ENCODE measurements at regions of chr15 and their contacts with region 1.

Region 1: DNA sequence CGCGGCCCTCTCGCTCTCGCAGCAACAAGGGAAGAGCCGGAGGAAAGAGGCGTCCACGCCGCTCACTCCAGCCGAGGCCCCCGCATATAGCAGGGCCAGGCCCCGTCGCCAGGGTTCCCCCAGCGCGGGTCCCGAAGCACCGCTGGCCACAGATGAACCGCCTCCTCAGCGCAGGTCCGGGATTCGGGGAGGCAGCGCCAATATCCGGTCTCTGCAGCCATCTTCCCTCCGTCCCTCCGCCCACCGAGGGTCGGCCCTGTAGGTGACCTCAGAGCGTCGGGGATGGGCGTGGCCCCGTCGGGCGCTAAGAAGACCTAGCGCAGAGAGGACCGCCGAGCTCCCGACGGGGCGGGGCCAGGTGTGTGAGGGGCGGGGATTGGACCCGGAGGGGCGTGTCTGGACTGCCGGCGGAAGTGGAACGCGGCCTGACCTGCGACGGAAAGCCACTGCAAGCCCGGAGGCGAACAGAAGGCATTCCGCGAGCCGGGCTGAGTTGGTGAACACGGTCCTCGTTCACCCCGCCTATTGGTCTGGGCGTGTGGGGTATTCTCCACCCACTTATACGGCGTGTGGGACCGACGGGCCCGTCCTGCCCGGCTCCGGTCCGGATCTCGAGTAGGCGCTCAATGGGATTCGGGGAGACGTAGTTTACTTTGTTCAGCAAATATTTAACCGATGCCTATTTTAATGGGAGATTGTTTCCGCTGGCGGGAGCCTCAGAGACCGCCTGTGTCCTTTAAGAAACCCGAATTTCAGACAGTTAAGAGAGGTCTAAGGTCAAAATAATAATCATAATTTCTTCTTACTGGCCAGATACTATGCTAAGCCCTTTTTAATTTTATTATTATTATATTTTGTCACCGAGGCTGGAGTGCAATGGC is 26.9 kb upstream of the MTHFS start:
- DNase-seq: peak; percentile 96 to 100 (median 98)
- ATAC-seq: peak; percentile 90 to 91
- H3K4me3 Mint-ChIP-seq: peak overlapping the region; percentile 90 to 100 (median 93)
- H3K27ac Mint-ChIP-seq: peak overlapping the region; percentile 95 to 99 (median 98)
- H3K4me1 Mint-ChIP-seq: peaks cover 13 to 33% (median 29%) of the 10 kb centered on the region in 4 donors
- H3K27me3 Mint-ChIP-seq: no peaks in the 10 kb centered on the region

Region 2: DNA sequence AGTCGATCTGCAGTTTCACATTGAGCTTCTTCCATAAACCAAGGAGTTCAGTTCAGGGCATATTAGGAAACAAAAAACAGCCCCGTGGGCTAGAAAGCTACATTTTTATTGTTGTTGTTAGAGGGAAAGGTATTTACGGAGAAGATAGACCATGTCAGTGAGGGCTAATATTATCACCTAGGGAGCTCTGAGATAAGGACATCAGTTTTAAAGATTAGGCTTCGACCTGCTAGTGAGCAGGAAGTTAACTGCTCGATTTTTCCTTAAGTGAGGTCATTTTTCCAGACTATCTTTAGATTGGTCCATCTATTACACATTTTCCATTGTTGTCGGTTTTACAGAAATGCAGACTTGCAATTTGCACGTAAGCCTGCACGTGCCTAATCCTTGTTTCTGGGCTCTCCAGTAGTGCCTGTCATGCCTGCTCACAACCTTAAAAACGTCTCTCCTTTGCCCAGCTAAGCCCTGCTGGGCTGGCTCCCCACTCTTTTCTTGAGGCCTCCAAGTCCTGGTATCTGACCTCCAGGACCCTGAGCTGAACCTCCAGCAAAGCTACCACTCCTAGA is 99.5 kb before region 1 on chr15:
- POLR2A ChIA-PET with region 1: no interaction called
- DNase-seq: no peak
- ATAC-seq: no peak
- H3K4me3 Mint-ChIP-seq: no peak overlapping the region
- H3K27ac Mint-ChIP-seq: no peak overlapping the region
- H3K4me1 Mint-ChIP-seq: peaks cover 0 to 3% (median 0%) of the 10 kb centered on the region in 4 donors
- H3K27me3 Mint-ChIP-seq: peaks cover 0 to 3% (median 0%) of the 10 kb centered on the region in 5 donors

Region 3: DNA sequence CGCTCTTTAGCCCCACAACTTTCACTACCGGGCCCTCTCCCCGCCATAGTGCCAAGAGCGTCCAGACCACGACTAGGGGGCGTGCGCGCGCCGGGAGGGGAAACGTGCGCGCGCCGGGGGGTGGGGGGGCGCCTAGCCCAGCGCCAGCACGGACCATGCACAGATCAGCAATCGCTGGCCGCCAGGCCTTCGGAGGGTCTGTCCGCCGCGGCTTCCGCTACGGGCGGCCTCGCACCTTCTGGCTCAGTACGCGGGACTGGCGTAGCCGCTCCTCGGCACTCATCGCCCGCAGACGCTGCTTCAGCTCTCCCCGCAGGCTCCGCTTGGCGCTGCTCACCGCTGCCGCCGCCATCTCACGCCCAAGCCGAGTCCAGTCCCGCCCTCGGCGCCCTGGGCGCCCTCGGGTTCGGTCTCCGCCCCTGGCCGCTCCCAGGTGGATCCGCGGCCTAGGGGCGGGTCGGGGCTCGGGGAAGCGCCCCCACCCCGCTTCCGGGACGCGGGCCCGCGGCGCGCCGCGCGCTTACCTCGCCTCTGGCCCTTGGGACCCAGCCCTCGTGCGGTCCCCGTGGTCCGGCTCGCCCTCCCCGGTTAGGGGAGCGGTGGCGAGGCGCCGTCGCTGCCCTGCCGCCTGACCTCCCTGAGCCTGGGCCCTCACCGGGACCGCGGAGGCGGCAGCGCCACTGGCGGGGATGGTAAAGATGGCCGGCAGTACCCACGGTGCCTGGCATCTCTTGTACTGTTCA is 26.9 kb before region 1 on chr15 and contains the start of gene MTHFS:
- POLR2A ChIA-PET with region 1: interaction called, 170 read pairs
- DNase-seq: peak; percentile 70 to 90 (median 77)
- ATAC-seq: peak; percentile 87 to 88
- H3K4me3 Mint-ChIP-seq: peak within 1 kb of the TSS; percentile 85 to 100 (median 98)
- H3K27ac Mint-ChIP-seq: peak within 1 kb of the TSS; percentile 99 to 100 (median 100)
- H3K4me1 Mint-ChIP-seq: peaks cover 23 to 46% (median 35%) of the 10 kb centered on the region in 4 donors
- H3K27me3 Mint-ChIP-seq: no peaks in the 10 kb centered on the region
- polyA plus RNA-seq, gene MTHFS: 82.6 to 106 (median 85.4) TPM

Region 4: GRCh38 chr15:79904271-79904670 is 19.5 kb before region 1 on chr15:
- POLR2A ChIA-PET with region 1: interaction called, 170 read pairs
- DNase-seq: no peak
- ATAC-seq: no peak
- H3K4me3 Mint-ChIP-seq: no peak overlapping the region
- H3K27ac Mint-ChIP-seq: no peak overlapping the region
- H3K4me1 Mint-ChIP-seq: peaks cover 0 to 5% (median 3%) of the 10 kb centered on the region in 4 donors
- H3K27me3 Mint-ChIP-seq: no peaks in the 10 kb centered on the region

Region 5: GRCh38 chr15:79970624-79971434 is 47.1 kb after region 1 on chr15 and contains the start of gene BCL2A1:
- POLR2A ChIA-PET with region 1: interaction called, 95 read pairs
- DNase-seq: peak; percentile 11 to 80 (median 56)
- ATAC-seq: peak; percentile 73 to 90
- H3K4me3 Mint-ChIP-seq: peak within 1 kb of the TSS; percentile 87 to 97 (median 93)
- H3K27ac Mint-ChIP-seq: peak within 1 kb of the TSS; percentile 94 to 97 (median 95)
- H3K4me1 Mint-ChIP-seq: peaks cover 26 to 58% (median 54%) of the 10 kb centered on the region in 4 donors
- H3K27me3 Mint-ChIP-seq: no peaks in the 10 kb centered on the region
- polyA plus RNA-seq, gene BCL2A1: 19.6 to 27.4 (median 25.9) TPM

Region 6: GRCh38 chr15:80058851-80059785 is 135.4 kb after region 1 on chr15 and contains the start of gene ZFAND6:
- POLR2A ChIA-PET with region 1: interaction called, 10 read pairs
- DNase-seq: peak; percentile 89 to 95 (median 94)
- ATAC-seq: peak; percentile 80 to 82
- H3K4me3 Mint-ChIP-seq: peak within 1 kb of the TSS; percentile 88 to 98 (median 94)
- H3K27ac Mint-ChIP-seq: peak within 1 kb of the TSS; percentile 88 to 98 (median 95)
- H3K4me1 Mint-ChIP-seq: peaks cover 12 to 39% (median 29%) of the 10 kb centered on the region in 4 donors
- H3K27me3 Mint-ChIP-seq: no peaks in the 10 kb centered on the region
- polyA plus RNA-seq, gene ZFAND6: 100.0 to 105 (median 104) TPM